Mucosa of descending colon (tissue), 3 donors: ENCODE measurements at regions of chr5 and their contacts with region 1.

Region 1: GRCh38 chr5:64229163-64229774 is 63.6 kb downstream of the RNF180 start:
- DNase-seq: no peak
- ATAC-seq: no peak
- H3K4me3 ChIP-seq: no peak overlapping the region
- H3K4me1 ChIP-seq: no peaks in the 10 kb centered on the region
- CTCF ChIP-seq: no peak

Region 2: DNA sequence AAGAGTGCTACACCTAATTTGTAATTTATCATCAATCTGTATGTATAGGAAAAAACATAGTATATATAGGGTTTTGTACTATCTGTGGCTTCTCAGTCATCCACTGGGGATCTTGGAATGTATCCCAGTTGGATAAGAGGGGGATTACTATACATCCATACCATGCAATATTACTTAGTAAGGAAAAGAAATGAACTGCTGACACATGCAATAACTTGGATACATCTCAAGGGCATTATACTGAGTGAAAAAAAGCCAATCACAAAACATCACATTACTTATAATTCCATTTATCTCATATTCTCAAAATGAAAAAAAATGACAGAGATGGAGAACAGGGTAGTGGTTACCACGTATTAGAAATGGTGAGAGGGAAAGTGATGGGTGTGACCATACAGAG is 168.3 kb after region 1 on chr5:
- intact Hi-C with region 1: no loop called
- DNase-seq: no peak
- ATAC-seq: no peak
- H3K4me3 ChIP-seq: no peak overlapping the region
- H3K4me1 ChIP-seq: no peaks in the 10 kb centered on the region
- CTCF ChIP-seq: no peak

Region 3: GRCh38 chr5:64603676-64604075 is 374.4 kb after region 1 on chr5:
- intact Hi-C with region 1: loop called in 1 of 2 experiments (anchors 10 kb)
- DNase-seq: no peak
- ATAC-seq: no peak
- H3K4me3 ChIP-seq: no peak overlapping the region
- H3K4me1 ChIP-seq: no peaks in the 10 kb centered on the region
- CTCF ChIP-seq: no peak

Region 4: DNA sequence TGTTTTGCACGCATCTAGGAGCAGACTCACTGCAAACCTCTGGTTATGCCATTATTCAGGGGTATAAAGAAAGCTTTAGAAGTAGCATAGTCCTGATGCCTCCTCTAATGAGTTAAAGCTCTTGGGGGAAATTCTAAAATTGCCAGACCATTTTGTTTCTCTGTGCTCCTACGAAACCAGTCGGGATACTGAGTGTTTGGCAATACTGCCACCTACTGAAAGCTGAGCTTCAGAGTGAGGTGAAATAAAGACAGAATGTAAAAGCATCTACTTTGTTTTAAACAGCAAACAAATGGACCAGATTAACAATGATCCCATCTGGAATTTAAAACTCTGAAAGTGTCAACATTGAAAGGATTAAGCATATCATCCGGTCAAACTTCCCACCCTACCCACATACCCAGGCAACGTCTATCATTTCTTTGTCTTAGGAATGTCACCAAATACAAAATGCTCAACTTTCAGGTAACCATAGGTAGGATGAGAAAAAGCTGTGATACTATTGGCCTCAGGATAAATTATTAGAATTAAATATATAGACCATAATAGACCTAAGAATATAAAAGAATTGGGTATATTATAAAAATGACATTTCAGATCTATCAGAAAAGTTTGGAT is 383.2 kb after region 1 on chr5:
- intact Hi-C with region 1: loop called (anchors 5 to 10 kb)
- DNase-seq: peak in 1 of 3 donors; percentile 69
- ATAC-seq: no peak
- H3K4me3 ChIP-seq: no peak overlapping the region
- H3K4me1 ChIP-seq: no peaks in the 10 kb centered on the region
- CTCF ChIP-seq: no peak

Region 5: GRCh38 chr5:64861281-64861680 is 632.0 kb after region 1 on chr5:
- intact Hi-C with region 1: no loop called
- DNase-seq: no peak
- ATAC-seq: no peak
- H3K4me3 ChIP-seq: no peak overlapping the region
- H3K4me1 ChIP-seq: no peaks in the 10 kb centered on the region
- CTCF ChIP-seq: no peak